Dorsolateral prefrontal cortex (tissue), 120 donors: ENCODE measurements at regions of chr1 and their contacts with region 1.

Region 1: DNA sequence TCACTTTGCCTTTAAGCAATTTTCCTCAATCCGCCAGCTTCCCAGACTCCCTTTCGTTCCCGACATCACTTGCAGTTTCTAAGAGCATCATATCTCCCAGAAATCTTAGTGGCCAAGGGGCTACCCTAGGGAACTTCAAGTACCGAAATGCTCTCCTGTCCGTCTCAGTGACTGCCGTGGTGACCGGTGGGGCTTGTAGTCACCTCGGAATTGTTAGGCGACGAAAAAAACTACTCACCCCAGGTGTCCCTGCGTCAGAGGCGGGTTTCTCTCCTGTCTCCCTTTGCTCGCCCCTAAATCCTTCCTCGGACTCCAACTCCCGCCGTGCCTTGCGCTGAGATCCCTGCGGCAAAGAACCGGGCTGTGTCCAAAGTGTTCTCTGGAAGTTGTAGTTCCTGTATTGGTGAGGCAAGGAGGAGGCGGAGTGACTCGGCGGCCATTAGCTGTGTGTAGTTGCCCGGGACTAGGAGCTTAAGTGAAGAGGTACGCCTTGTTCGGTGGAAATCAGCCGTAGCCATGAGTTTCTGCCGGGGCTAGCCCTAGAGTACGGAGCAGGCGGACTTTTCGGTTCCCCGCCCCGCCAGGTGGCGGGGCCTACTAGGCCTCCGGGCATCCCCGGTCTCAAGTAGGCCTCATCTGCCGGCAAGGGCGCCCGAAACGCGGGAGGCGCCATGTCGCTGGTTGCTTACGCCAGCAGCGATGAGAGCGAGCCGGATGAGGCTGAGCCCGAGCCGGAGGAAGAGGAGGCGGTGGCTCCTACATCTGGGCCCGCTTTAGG is at the start of gene PRCC:
- DNase-seq: peak; percentile 98 to 100 (median 100)
- H3K4me3 ChIP-seq: peak within 1 kb of the TSS; percentile 72 to 99 (median 95)
- H3K27ac ChIP-seq: peak within 1 kb of the TSS; percentile 64 to 99 (median 96)
- H3K27me3 ChIP-seq: no peaks in the 10 kb centered on the region
- CTCF ChIP-seq: peak in 30 of 56 donors; percentile 3 to 52 (median 17)
- total RNA-seq, gene PRCC: 46.7 to 90.4 (median 66.7) TPM

Region 2: GRCh38 chr1:155961937-155962336 is 805.4 kb before region 1 on chr1:
- intact Hi-C with region 1: no loop called
- DNase-seq: peak in 8 of 10 donors; percentile 68 to 91 (median 76)
- H3K4me3 ChIP-seq: peak overlapping the region in 14 of 59 donors; percentile 2 to 43 (median 14)
- H3K27ac ChIP-seq: peak overlapping the region; percentile 62 to 100 (median 95)
- H3K27me3 ChIP-seq: no peaks in the 10 kb centered on the region
- CTCF ChIP-seq: peak in 29 of 56 donors; percentile 9 to 45 (median 28)

Region 3: GRCh38 chr1:156677616-156678596 is 89.4 kb before region 1 on chr1:
- intact Hi-C with region 1: no loop called
- DNase-seq: peak in 8 of 10 donors; percentile 57 to 79 (median 71)
- H3K4me3 ChIP-seq: peak overlapping the region in 57 of 59 donors; percentile 20 to 68 (median 51)
- H3K27ac ChIP-seq: peak overlapping the region in 39 of 59 donors; percentile 12 to 86 (median 72)
- H3K27me3 ChIP-seq: peaks cover 0 to 13% (median 0%) of the 10 kb centered on the region in 45 donors
- CTCF ChIP-seq: peak; percentile 72 to 96 (median 92)

Region 4: DNA sequence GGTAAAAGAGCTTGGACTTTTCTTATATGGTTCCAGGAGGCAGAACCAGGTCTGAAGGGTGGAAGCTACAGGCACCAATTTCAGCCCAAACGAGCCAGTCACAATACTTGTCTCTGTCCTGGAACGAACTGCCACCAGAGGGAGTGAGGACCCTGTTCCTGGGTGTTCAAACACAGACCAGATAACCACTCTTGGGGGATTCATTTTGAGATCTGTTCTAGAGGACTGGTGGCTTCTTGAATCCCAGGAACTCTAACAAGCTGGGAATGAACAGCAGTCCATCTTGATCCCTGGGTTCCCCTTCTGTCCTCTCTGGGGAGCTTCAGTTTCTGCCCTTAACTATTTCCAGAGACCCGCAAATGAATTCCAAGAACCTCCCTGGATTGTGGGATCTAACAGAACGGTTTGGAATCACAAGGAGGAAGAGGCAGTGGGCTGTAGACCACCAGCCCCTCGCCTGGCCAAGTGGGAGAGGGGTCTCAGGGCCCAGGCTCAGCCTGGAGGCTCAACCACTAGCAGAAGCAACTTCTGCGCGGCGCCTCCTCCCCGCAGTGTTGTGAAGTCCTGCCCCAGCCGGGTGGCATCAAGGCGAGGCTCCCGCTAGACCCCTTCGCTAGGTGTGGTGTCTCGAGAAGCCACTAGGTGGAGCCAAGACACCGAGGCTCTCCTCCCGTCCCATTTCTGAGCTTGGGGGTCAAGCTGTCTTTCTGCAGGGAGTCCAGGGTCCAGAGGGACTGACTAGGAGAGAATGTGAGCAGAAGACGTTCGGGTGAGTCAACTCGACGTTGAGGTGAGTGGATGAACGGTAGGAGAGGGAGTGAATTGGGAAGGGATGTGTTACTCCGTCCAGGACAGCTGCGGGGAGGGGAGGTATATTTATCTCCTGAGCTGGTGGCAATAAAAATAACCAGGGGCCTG is 78.0 kb before region 1 on chr1:
- intact Hi-C with region 1: loop called in 1 of 2 experiments (anchors 2 kb)
- DNase-seq: peak; percentile 56 to 82 (median 69)
- H3K4me3 ChIP-seq: peak overlapping the region in 44 of 59 donors; percentile 2 to 54 (median 26)
- H3K27ac ChIP-seq: no peak overlapping the region
- H3K27me3 ChIP-seq: peaks cover 0 to 35% (median 4%) of the 10 kb centered on the region in 45 donors
- CTCF ChIP-seq: peak; percentile 63 to 96 (median 92)

Region 5: GRCh38 chr1:156740679-156741612 is 26.3 kb before region 1 on chr1 and contains the start of gene MRPL24:
- intact Hi-C with region 1: loop called (anchors 1 kb)
- DNase-seq: peak; percentile 97 to 99 (median 98)
- H3K4me3 ChIP-seq: peak within 1 kb of the TSS; percentile 47 to 98 (median 83)
- H3K27ac ChIP-seq: peak within 1 kb of the TSS; percentile 79 to 100 (median 97)
- H3K27me3 ChIP-seq: no peaks in the 10 kb centered on the region
- CTCF ChIP-seq: peak in 18 of 56 donors; percentile 8 to 43 (median 26)
- total RNA-seq, gene MRPL24: 38.0 to 78.2 (median 53.2) TPM

Region 6: DNA sequence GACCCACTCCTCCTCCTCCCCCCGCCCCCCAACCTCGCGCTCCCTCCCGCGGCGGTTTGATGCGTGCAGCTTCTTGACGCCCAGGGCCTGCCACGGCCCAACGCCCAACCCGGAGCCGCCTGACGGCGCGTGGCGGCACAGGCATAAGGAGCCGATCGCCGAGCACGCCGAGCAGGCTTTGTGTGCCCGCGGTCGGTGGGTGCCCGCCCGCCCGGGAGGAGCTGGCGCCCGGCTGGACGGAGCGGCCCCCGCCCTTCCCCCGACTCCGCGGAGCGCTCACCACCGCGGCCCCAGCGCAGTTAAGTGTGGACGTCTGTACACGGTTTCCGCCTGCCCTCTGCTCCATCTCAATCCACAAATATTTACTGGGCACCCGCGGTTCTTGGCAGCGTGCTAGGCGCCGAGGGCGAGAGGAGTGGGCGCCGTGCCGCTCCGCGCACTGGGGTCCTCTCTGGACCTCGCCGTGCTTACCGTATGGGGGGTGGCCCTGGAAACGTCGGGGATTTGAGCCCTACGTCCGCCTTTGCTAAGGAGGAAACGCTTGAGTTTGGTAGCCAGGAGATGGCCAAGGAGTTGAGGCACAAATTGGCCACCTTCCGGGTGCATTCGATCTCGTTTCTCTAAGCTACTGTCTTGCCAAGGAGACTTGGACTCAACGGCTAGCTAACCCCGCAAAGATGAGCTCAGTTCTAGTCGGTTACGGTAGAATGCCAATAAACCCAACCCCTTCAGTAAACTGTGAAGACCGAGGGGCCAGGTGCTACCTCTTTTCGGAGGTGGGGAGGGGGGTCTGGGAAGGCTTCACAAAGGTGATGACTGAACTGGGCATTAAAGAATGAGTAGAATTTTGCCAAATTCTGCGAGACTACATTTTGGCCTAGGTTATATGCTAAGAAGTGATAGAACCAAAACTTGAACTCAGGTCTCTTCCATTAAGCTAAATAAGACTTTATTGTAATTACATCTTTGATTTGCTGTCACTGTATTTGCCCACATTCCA is 15.2 kb before region 1 on chr1:
- intact Hi-C with region 1: loop called (anchors 1 kb)
- DNase-seq: peak; percentile 96 to 99 (median 98)
- H3K4me3 ChIP-seq: peak overlapping the region; percentile 62 to 100 (median 96)
- H3K27ac ChIP-seq: peak overlapping the region; percentile 44 to 100 (median 98)
- H3K27me3 ChIP-seq: no peaks in the 10 kb centered on the region
- CTCF ChIP-seq: peak in 12 of 56 donors; percentile 7 to 32 (median 12)